CD4-positive, alpha-beta memory T cell (primary cell): ENCODE measurements at regions of chr6 and their contacts with region 1.

Region 1: GRCh38 chr6:6547110-6547879 is 41.2 kb upstream of the LY86 start:
- DNase-seq: peak; percentile 65 to 77 (median 73)
- H3K4me3 ChIP-seq: peak overlapping the region; percentile 17 to 35
- H3K4me3 Mint-ChIP-seq: peak overlapping the region; percentile 55 to 84 (median 77)
- H3K27ac ChIP-seq: no peak overlapping the region
- H3K27ac Mint-ChIP-seq: peak overlapping the region in 2 of 7 donors; percentile 44 to 48
- H3K4me1 ChIP-seq: peaks cover 12% of the 10 kb centered on the region
- H3K4me1 Mint-ChIP-seq: peaks cover 3 to 12% (median 4%) of the 10 kb centered on the region in 4 donors
- H3K27me3 ChIP-seq: peaks cover 9% of the 10 kb centered on the region
- H3K27me3 Mint-ChIP-seq: peaks cover 27 to 38% of the 10 kb centered on the region in 2 donors

Region 2: GRCh38 chr6:5398530-5398929 is 1148.8 kb before region 1 on chr6:
- CTCF ChIA-PET with region 1: no interaction called
- POLR2A ChIA-PET with region 1: no interaction called
- intact Hi-C with region 1: loop called (anchors 5 kb)
- DNase-seq: peak in 4 of 5 donors; percentile 32 to 40 (median 36)
- H3K4me3 ChIP-seq: no peak overlapping the region
- H3K4me3 Mint-ChIP-seq: no peak overlapping the region
- H3K27ac ChIP-seq: no peak overlapping the region
- H3K27ac Mint-ChIP-seq: no peak overlapping the region
- H3K4me1 ChIP-seq: no peaks in the 10 kb centered on the region
- H3K4me1 Mint-ChIP-seq: peaks cover 5 to 24% (median 14%) of the 10 kb centered on the region in 4 donors
- H3K27me3 ChIP-seq: no peaks in the 10 kb centered on the region
- H3K27me3 Mint-ChIP-seq: no peaks in the 10 kb centered on the region

Region 3: GRCh38 chr6:5471044-5471443 is 1076.3 kb before region 1 on chr6:
- CTCF ChIA-PET with region 1: interaction called, 12 read pairs
- POLR2A ChIA-PET with region 1: no interaction called
- intact Hi-C with region 1: no loop called
- DNase-seq: peak in 4 of 5 donors; percentile 36 to 59 (median 44)
- H3K4me3 ChIP-seq: no peak overlapping the region
- H3K4me3 Mint-ChIP-seq: no peak overlapping the region
- H3K27ac ChIP-seq: no peak overlapping the region
- H3K27ac Mint-ChIP-seq: no peak overlapping the region
- H3K4me1 ChIP-seq: no peaks in the 10 kb centered on the region
- H3K4me1 Mint-ChIP-seq: peaks cover 0 to 7% (median 3%) of the 10 kb centered on the region in 4 donors
- H3K27me3 ChIP-seq: no peaks in the 10 kb centered on the region
- H3K27me3 Mint-ChIP-seq: no peaks in the 10 kb centered on the region